HCT116 (cell line): ENCODE measurements at regions of chr11 and their contacts with region 1.

Region 1: GRCh38 chr11:26993965-26994457 is at the start of gene FIBIN:
- DNase-seq: no peak
- ATAC-seq: no peak
- H3K4me3 ChIP-seq: no peak within 1 kb of the TSS
- H3K27ac ChIP-seq: no peak within 1 kb of the TSS
- H3K4me1 ChIP-seq: no peaks in the 10 kb centered on the region
- H3K27me3 ChIP-seq: no peaks in the 10 kb centered on the region
- CTCF ChIP-seq: no peak
- POLR2A ChIP-seq: no peak
- RAD21 ChIP-seq: no peak
- total RNA-seq, gene FIBIN: not detected

Region 2: DNA sequence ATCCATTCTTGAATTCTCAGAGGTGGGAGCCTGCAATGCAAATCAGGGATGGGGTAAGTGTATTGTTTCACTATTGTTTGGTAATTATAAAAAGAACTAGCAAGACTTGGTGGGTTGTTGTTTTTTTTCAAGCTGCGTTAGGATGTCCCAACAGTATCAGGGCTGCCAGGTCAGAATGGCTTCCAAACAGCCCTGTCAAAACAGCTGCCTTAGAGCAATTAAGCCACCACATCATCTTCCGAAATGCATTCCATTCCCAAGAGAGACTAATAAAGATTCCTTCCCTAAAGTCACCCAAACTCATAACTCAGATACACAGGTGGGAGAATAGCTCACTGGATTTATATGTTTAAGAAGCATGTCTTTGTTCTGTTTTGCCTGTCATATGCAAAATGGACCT is 70.1 kb after region 1 on chr11:
- CTCF ChIA-PET with region 1: no interaction called
- POLR2A ChIA-PET with region 1: no interaction called
- RAD21 ChIA-PET with region 1: no interaction called
- intact Hi-C with region 1: loop called (anchors 2 kb)
- DNase-seq: no peak
- ATAC-seq: no peak
- H3K4me3 ChIP-seq: no peak overlapping the region
- H3K27ac ChIP-seq: no peak overlapping the region
- H3K4me1 ChIP-seq: no peaks in the 10 kb centered on the region
- H3K27me3 ChIP-seq: no peaks in the 10 kb centered on the region
- CTCF ChIP-seq: no peak
- POLR2A ChIP-seq: no peak
- RAD21 ChIP-seq: no peak